RWPE1 (cell line): ENCODE measurements at regions of chr10 and their contacts with region 1.

Region 1: DNA sequence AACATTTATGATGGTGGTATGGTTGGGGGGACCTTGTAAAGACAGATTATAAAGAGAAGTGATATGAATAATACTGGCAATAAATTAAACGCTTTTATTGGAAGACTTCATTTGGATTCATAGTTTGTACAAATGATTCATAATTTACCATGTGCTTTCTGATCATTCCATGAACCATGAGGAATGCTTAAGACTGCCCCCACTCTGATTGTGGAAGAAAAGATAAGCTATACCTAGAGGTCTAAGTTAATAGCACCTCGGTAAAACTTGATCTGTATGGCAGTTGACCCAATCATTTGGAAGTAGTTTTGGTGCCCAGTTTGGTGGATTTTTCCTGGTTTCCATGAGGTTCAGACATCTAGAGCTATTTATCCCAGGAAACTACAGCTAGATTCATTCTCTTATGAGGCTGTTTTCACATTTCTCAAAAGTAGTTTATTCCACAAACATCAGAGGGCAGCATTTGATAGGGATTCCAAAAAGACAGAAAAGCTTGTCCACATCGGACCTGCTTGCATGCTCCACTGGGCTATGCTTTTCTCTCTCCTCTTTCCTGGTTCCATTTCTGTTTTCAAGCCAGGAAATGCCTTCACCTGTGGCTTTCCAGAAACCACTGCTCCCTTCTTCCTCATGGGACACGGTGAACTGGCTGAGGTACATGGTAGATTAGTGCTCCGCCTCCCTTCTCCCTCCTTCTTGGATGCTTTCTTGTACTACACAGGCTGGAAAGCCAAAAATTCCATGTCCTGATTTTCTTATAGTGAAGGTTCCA is 29.2 kb downstream of the TFAM start:
- DNase-seq: peak; percentile 46
- H3K27ac ChIP-seq: no peak overlapping the region
- CTCF ChIP-seq: 0 out of 2 replicates have a peak, but pooled peaks have one; percentile 15

Region 2: GRCh38 chr10:58334817-58335305 is 79.6 kb before region 1 on chr10 and contains the start of gene UBE2D1:
- CTCF ChIA-PET with region 1: no interaction called
- POLR2A ChIA-PET with region 1: no interaction called
- DNase-seq: peak; percentile 80
- H3K27ac ChIP-seq: peak within 1 kb of the TSS; percentile 66
- CTCF ChIP-seq: no peak

Region 3: GRCh38 chr10:58641095-58641531 is 226.7 kb after region 1 on chr10:
- CTCF ChIA-PET with region 1: interaction called, 10 read pairs
- POLR2A ChIA-PET with region 1: no interaction called
- DNase-seq: peak; percentile 28
- H3K27ac ChIP-seq: no peak overlapping the region
- CTCF ChIP-seq: peak; percentile 47